BJ (cell line): ENCODE measurements at regions of chr17 and their contacts with region 1.

Region 1: DNA sequence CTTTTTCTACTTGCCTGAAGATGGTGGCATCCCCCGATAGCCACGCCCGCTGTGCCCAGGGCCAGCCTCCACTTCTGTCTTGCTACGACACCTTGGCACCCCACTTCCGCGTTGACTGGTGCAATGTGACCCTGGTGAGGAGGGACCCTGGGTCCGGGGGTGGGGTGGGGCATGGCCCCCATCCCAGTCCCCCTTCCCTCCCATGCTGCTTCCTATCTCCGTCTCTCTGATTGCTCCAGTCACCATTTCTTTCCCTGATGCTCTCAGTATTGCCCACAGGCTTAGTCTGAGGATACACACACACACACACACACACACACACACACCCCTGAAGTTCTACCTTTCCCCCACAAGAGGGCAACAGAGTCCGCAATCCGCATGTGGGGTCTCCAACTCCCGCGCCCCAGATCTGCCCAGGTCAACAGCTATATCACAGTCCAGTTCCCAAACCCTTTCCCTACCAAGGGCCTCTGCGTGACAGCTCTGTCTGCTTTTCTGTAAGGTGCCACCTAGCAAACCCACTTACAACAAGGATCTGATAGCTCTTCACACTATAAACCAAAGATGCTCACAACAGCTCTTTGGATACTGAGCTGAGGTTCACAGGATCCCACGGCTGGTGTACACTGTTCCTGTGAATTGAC is 3.4 kb downstream of the SGCA start:
- DNase-seq: no peak
- H3K4me3 ChIP-seq: no peak overlapping the region
- H3K27me3 ChIP-seq: no peaks in the 10 kb centered on the region
- CTCF ChIP-seq: peak; percentile 93

Region 2: DNA sequence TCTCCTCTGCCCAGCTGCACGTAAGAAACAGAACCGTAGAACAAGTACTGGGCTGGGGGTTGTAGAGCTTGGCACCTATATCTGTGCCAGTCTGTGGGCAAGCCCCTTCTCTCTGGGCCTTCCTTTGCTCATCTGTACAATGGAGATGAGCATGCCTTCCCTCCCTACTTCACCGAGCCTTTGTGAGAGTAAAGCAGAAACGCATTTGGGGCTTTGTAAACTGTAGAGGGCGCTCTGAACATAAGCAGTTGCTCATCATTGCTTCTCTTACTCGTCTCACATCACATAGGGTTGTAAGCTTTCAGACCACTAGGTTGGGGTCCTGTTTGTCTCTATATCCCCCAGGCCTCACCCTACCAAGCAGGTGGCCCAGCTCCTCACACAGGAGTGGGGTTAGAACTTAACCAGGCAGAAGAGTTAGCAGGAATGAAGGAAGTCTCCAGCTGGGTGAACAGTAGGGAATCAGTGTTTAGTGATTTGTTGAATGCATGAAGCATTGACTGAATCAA is 54.3 kb before region 1 on chr17:
- CTCF ChIA-PET with region 1: interaction called, 11 read pairs
- POLR2A ChIA-PET with region 1: no interaction called
- DNase-seq: no peak
- H3K4me3 ChIP-seq: no peak overlapping the region
- H3K27me3 ChIP-seq: peaks cover 2% of the 10 kb centered on the region
- CTCF ChIP-seq: peak; percentile 75

Region 3: GRCh38 chr17:50183421-50183994 is 14.3 kb after region 1 on chr17:
- CTCF ChIA-PET with region 1: interaction called, 31 read pairs
- POLR2A ChIA-PET with region 1: interaction called, 3 read pairs
- DNase-seq: no peak
- H3K4me3 ChIP-seq: no peak overlapping the region
- H3K27me3 ChIP-seq: no peaks in the 10 kb centered on the region
- CTCF ChIP-seq: no peak

Region 4: GRCh38 chr17:50269477-50270434 is 100.5 kb after region 1 on chr17:
- CTCF ChIA-PET with region 1: interaction called, 146 read pairs
- POLR2A ChIA-PET with region 1: interaction called, 5 read pairs
- DNase-seq: no peak
- H3K4me3 ChIP-seq: peak overlapping the region; percentile 41
- H3K27me3 ChIP-seq: no peaks in the 10 kb centered on the region
- CTCF ChIP-seq: peak; percentile 91

Region 5: GRCh38 chr17:50289991-50290702 is 120.9 kb after region 1 on chr17:
- CTCF ChIA-PET with region 1: interaction called, 229 read pairs
- POLR2A ChIA-PET with region 1: no interaction called
- DNase-seq: peak; percentile 98
- H3K4me3 ChIP-seq: peak overlapping the region; percentile 18
- H3K27me3 ChIP-seq: no peaks in the 10 kb centered on the region
- CTCF ChIP-seq: no peak

Region 6: GRCh38 chr17:50308666-50309065 is 139.4 kb after region 1 on chr17:
- CTCF ChIA-PET with region 1: interaction called, 11 read pairs
- POLR2A ChIA-PET with region 1: no interaction called
- DNase-seq: no peak
- H3K4me3 ChIP-seq: no peak overlapping the region
- H3K27me3 ChIP-seq: peaks cover 10% of the 10 kb centered on the region
- CTCF ChIP-seq: no peak

Region 7: DNA sequence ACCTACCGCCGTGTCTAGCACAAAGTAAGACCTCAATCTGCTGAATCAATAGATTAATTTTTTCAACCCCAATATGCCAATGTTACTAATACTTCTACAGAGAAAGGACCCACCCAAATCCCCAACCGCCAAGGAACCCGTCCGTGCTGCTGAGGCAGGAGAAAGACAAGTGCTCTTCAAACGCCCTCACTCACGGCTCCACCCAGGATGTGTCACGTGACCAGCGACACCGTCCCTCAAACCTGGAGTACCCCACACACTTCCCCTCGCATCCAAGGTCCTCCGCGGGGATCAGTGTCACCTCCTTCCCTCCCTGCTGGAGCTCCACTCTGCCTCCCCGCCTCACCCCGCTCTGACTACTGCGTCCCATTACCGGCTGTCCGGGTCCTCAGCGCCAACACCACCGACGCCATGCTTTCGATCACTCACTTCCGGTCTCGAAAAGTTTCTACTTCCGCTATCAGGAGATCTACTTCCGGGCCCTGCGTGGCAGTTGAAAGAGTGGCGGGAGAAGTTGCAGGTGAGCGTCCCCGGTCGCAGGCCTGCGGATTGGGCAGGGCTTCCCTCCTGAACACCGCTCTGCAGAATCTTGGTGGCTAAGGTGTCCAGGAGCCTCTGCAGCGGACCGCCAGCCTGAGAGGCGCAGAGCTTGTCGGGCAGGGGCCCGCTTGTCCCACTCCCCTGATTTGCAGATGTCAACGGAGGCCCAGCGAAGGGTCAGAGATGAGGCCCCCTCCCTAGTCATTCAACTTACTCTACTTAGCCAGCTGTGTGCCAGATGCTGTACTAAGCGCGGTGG is 203.7 kb after region 1 on chr17 and contains the starts of genes EME1 and MRPL27:
- CTCF ChIA-PET with region 1: no interaction called
- POLR2A ChIA-PET with region 1: no interaction called
- DNase-seq: peak; percentile 43
- H3K4me3 ChIP-seq: peak within 1 kb of the TSS; percentile 54
- H3K27me3 ChIP-seq: no peaks in the 10 kb centered on the region
- CTCF ChIP-seq: no peak
- polyA plus RNA-seq, gene EME1: 5.3 and 5.9 TPM in 2 replicates
- polyA plus RNA-seq, gene MRPL27: 115 and 142 TPM in 2 replicates